Activated T-helper 1 cell treated with anti-CD3 and anti-CD28 coated beads, Interleukin-12 subunit alpha, Interleukin-12 subunit beta, Interleukin-2, Interleukin-4 antibody, amounts not matched to agents 30 ng/mL and 10 ng/mL and 1 ng/mL, durations not matched to agents 14 hours and 24 hours and 36 hours (primary cell): ENCODE measurements at regions of chr4 and their contacts with region 1.

Region 1: GRCh38 chr4:15794905-15795304 is 16.8 kb downstream of the CD38 start:
- DNase-seq: no peak
- H3K4me3 Mint-ChIP-seq: peak overlapping the region; percentile 23
- H3K27ac Mint-ChIP-seq: peak overlapping the region; percentile 92
- H3K4me1 Mint-ChIP-seq: peaks cover 73% of the 10 kb centered on the region
- H3K27me3 Mint-ChIP-seq: no peaks in the 10 kb centered on the region

Region 2: GRCh38 chr4:15336410-15337172 is 458.3 kb before region 1 on chr4:
- intact Hi-C with region 1: no loop called
- DNase-seq: no peak
- H3K4me3 Mint-ChIP-seq: no peak overlapping the region
- H3K27ac Mint-ChIP-seq: no peak overlapping the region
- H3K4me1 Mint-ChIP-seq: no peaks in the 10 kb centered on the region
- H3K27me3 Mint-ChIP-seq: peaks cover 9% of the 10 kb centered on the region

Region 3: DNA sequence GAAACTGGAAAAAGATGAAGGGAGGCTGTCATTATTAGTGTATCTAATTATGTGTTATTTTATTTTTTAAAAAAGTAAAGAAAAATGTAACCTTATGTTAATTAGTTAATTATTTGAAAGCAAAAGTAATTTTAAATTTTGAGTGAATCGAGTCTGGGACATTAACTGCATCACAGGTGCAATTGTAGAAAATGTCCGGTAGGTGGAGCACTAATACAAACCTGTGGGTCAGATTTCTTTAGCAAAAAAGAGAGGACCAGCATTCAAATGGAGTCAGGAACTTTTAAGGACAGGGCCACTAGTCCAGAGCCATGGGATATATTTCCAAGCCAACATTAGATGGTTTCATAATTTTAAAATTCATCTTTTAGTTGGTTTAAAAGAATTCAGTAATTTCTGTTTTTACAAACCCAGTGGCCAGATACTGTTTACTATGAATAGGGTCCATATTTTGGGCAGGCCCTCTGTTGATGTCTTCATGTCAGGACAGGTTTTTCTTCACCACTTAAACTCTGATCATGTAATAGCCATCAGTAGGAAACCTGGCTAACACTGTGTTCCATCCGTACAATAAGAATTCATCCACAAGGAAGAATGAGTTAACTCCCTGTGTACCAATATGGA is 64.9 kb before region 1 on chr4:
- intact Hi-C with region 1: loop called (anchors 2 kb)
- DNase-seq: peak; percentile 16
- H3K4me3 Mint-ChIP-seq: no peak overlapping the region
- H3K27ac Mint-ChIP-seq: no peak overlapping the region
- H3K4me1 Mint-ChIP-seq: peaks cover 29% of the 10 kb centered on the region
- H3K27me3 Mint-ChIP-seq: peaks cover 3% of the 10 kb centered on the region

Region 4: DNA sequence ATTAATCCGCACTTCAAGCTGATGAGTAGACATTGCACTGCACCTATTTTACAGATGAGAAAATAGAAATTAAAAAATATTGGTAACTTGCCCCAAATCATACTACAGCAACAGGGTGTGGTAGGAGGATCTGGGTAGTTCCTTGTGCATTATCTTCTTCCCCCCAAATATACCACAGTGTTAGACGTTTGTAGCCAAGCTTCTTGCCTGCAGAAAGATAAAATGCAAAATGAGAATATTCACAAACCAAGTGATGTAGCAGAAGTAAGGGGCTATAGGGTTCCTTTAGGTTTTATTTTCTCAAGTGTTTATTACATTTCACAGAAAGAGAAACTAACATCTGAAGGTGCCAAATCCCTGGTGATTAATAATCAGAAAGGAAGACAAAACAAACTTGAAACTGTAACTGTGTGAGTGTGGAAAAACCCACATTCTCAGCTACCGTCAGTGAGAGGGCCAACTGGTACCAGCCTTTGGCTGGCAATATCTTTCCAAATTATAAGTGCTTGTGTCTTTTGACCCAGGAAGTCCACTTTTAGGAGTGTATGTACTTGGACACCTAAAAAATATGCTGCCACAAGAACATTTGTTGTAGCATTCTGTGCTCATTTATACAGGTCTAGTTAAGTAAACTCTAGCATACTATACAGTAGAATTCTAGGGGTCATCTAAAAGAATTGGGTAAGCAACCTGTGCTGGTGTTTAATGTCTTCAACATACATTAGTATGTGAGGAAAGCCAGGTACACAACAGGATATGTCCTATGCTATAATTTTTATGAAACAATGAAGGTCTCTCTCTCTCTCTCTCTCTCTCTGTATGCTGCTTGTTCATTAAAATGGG is 23.5 kb before region 1 on chr4:
- intact Hi-C with region 1: loop called (anchors 1 kb)
- DNase-seq: peak; percentile 37
- H3K4me3 Mint-ChIP-seq: peak overlapping the region; percentile 66
- H3K27ac Mint-ChIP-seq: peak overlapping the region; percentile 86
- H3K4me1 Mint-ChIP-seq: peaks cover 85% of the 10 kb centered on the region
- H3K27me3 Mint-ChIP-seq: no peaks in the 10 kb centered on the region

Region 5: DNA sequence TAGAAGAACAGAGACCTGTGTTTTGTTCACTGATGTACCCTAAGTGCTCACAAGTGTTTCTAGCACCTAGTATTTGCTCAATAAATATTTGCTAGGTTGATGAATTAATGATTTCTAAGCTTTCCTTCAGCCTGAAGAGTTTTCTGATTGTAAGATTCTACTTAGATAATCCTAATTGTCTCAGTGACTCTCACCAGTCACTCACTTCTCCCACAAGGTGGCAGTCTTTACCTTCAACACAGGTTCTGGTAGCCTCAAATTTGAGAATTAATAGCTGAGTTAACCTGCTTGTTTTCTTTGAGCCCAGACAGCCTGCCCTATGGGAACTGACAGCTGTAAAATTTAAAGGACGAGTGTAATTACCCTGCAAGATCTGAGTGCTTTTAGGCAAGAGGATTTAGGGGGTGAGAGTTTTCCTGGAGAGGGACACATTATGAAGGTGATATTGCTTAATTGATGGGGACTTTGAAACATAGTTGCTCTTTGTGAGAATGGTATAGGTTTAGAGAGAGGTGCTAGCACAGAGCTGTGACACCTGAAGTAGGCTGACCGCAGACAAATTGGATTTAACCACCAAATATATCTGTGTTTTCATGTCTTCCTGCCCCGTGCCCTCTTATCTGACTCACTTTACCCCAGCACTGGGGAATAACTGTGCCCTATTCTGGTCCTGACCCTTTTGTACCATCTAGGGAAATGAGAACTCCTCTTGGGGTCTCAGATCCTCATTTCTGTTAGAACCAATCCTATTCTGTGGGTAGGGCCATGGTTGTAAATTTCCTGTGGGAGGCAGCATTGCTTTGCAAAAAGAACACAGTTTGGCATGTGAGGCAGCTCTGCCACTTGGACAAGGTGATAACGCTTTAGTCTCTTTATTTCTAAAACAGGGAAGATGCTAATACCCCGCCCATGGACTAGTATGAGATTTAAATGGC is 10.9 kb after region 1 on chr4:
- intact Hi-C with region 1: loop called (anchors 1 kb)
- DNase-seq: no peak
- H3K4me3 Mint-ChIP-seq: no peak overlapping the region
- H3K27ac Mint-ChIP-seq: no peak overlapping the region
- H3K4me1 Mint-ChIP-seq: peaks cover 74% of the 10 kb centered on the region
- H3K27me3 Mint-ChIP-seq: no peaks in the 10 kb centered on the region

Region 6: DNA sequence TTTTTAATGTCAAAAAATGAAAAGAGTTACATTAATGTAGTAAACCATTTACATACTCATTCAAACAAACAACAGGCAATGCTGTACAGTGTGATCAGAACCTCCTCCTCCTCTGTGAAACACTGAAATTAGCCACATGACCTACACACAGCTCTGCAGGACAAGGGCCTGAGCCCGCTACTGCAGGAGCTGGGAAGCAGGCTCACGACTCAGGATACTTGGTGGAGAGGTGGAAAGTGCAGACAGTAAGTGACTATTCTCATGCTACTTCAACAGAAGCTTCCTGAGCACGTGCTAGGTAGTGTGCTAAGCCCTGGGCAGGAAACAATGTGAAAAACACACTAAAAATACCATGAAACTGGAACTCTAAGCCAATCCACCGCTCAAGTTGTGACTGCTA is 374.6 kb after region 1 on chr4:
- intact Hi-C with region 1: no loop called
- DNase-seq: no peak
- H3K4me3 Mint-ChIP-seq: no peak overlapping the region
- H3K27ac Mint-ChIP-seq: no peak overlapping the region
- H3K4me1 Mint-ChIP-seq: no peaks in the 10 kb centered on the region
- H3K27me3 Mint-ChIP-seq: no peaks in the 10 kb centered on the region

Region 7: GRCh38 chr4:16225863-16226815 is 431.2 kb after region 1 on chr4 and contains the start of gene TAPT1:
- intact Hi-C with region 1: loop called (anchors 5 kb)
- DNase-seq: peak; percentile 78
- H3K4me3 Mint-ChIP-seq: peak within 1 kb of the TSS; percentile 97
- H3K27ac Mint-ChIP-seq: peak within 1 kb of the TSS; percentile 96
- H3K4me1 Mint-ChIP-seq: peaks cover 60% of the 10 kb centered on the region
- H3K27me3 Mint-ChIP-seq: no peaks in the 10 kb centered on the region
- total RNA-seq, gene TAPT1: 26.0 and 31.8 TPM in 2 replicates

Region 8: DNA sequence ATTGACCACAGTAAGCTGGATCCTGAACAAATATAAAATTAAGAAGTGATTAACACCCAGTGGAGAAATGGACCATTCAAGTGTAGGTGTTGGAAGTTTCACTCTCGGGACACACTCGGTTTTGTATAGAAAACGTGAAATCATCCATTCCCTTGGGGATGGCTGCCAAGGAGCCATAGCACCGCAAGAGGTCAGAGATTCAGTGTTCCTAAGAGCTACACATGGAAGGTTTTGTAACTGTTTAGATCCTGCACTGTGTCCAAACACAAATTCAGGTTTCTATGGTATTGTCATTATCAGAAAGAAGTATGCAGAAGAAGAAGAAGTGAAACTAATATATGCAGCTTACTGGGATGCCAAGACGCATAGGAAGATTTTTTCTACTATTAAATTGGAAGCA is 822.5 kb after region 1 on chr4:
- intact Hi-C with region 1: no loop called
- DNase-seq: no peak
- H3K4me3 Mint-ChIP-seq: no peak overlapping the region
- H3K27ac Mint-ChIP-seq: no peak overlapping the region
- H3K4me1 Mint-ChIP-seq: no peaks in the 10 kb centered on the region
- H3K27me3 Mint-ChIP-seq: no peaks in the 10 kb centered on the region